Activated T-helper 2 cell treated with anti-CD3 and anti-CD28 coated beads, Interferon-gamma antibody, Interleukin-2, Interleukin-4, amounts not matched to agents 10 μg/mL and 5 μg/mL and 100 μg/mL, durations not matched to agents 14 hours and 24 hours and 36 hours (primary cell): ENCODE measurements at regions of chr14 and their contacts with region 1.

Region 1: GRCh38 chr14:30656190-30656632 is 34.1 kb downstream of the SCFD1 start:
- DNase-seq: no peak
- H3K4me3 Mint-ChIP-seq: no peak overlapping the region
- H3K27ac Mint-ChIP-seq: no peak overlapping the region
- H3K4me1 Mint-ChIP-seq: no peaks in the 10 kb centered on the region
- H3K27me3 Mint-ChIP-seq: no peaks in the 10 kb centered on the region

Region 2: GRCh38 chr14:30906752-30907658 is 250.8 kb after region 1 on chr14:
- intact Hi-C with region 1: loop called (anchors 2 kb)
- DNase-seq: no peak
- H3K4me3 Mint-ChIP-seq: no peak overlapping the region
- H3K27ac Mint-ChIP-seq: no peak overlapping the region
- H3K4me1 Mint-ChIP-seq: peaks cover 6% of the 10 kb centered on the region
- H3K27me3 Mint-ChIP-seq: no peaks in the 10 kb centered on the region